ENCODE measurements at regions of chr6 and their contacts with region 1.

Region 1: GRCh38 chr6:31952140-31952805 is 6.4 kb downstream of the CFB start:
- DNase-seq: peak; percentile 28 to 62
- H3K4me3 ChIP-seq: no peak overlapping the region
- H3K4me1 ChIP-seq: no peaks in the 10 kb centered on the region
- H3K27me3 ChIP-seq: no peaks in the 10 kb centered on the region

Region 2: DNA sequence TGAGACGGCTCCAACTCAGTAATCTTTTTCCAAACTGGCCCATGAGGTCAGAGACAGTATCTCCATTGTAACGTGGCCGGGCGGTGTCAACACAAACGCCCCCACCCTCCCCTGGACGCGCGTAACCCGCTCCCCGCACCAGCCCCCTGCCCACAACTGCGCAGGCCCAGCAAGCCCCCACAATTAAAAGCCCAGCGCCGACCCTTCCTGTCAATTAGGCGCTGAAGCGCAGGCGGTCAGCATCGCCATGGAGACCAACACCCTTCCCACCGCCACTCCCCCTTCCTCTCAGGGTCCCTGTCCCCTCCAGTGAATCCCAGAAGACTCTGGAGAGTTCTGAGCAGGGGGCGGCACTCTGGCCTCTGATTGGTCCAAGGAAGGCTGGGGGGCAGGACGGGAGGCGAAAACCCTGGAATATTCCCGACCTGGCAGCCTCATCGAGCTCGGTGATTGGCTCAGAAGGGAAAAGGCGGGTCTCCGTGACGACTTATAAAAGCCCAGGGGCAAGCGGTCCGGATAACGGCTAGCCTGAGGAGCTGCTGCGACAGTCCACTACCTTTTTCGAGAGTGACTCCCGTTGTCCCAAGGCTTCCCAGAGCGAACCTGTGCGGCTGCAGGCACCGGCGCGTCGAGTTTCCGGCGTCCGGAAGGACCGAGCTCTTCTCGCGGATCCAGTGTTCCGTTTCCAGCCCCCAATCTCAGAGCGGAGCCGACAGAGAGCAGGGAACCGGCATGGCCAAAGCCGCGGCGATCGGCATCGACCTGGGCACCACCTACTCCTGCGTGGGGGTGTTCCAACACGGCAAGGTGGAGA is 137.0 kb before region 1 on chr6 and contains the starts of genes HSPA1A and HSPA1L:
- in situ Hi-C with region 1: no loop called
- DNase-seq: peak; percentile 97 to 98
- H3K4me3 ChIP-seq: peak within 1 kb of the TSS; percentile 66
- H3K4me1 ChIP-seq: peaks cover 18% of the 10 kb centered on the region
- H3K27me3 ChIP-seq: no peaks in the 10 kb centered on the region

Region 3: DNA sequence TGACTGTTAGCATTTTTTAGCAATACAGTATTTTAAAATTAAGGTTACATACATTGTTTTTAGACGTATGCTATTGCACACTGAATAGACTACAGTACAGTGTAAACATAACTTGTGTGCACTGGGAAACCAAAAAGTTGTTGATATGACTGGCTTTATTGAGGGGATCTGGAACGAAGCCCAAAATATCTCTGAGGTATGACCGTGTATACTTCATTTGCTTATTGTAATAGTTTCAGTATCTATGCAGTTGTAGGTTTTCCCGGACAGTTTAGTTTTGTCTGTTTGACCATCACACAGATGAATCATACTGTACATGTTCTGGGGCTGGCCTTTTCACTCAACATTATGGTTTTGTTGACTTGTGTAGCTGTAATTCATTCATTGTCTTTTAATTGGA is 43.5 kb before region 1 on chr6:
- in situ Hi-C with region 1: loop called (anchors 5 kb)
- DNase-seq: no peak
- H3K4me3 ChIP-seq: no peak overlapping the region
- H3K4me1 ChIP-seq: no peaks in the 10 kb centered on the region
- H3K27me3 ChIP-seq: no peaks in the 10 kb centered on the region

Region 4: GRCh38 chr6:32047850-32048766 is 95.8 kb after region 1 on chr6:
- in situ Hi-C with region 1: no loop called
- DNase-seq: peak; percentile 54 to 88
- H3K4me3 ChIP-seq: no peak overlapping the region
- H3K4me1 ChIP-seq: no peaks in the 10 kb centered on the region
- H3K27me3 ChIP-seq: no peaks in the 10 kb centered on the region